H1 (cell line): ENCODE measurements at regions of chr2 and their contacts with region 1.

Region 1: GRCh38 chr2:185738679-185739472 is at the start of gene FSIP2:
- DNase-seq: peak; percentile 89 to 98
- H3K4me3 ChIP-seq: peak within 1 kb of the TSS; percentile 50 to 75 (median 61)
- H3K27ac ChIP-seq: no peak within 1 kb of the TSS; the same call in 1 of the 2 replicates
- H3K4me1 ChIP-seq: no peaks in the 10 kb centered on the region; a peak in 3 of 7 replicates
- H3K27me3 ChIP-seq: no peaks in the 10 kb centered on the region; a peak in 1 of 7 replicates
- CTCF ChIP-seq: peak; percentile 100
- EP300 ChIP-seq: 0 out of 3 replicates have a peak, but pooled peaks of 1 of the 2 experiments have one; percentile 50
- POLR2A ChIP-seq: peak in 1 of 2 experiments; percentile 29; a peak in 1 of 3 replicates
- RAD21 ChIP-seq: peak; percentile 98
- total RNA-seq, gene FSIP2: 1.4 and 1.7 TPM in 2 replicates

Region 2: GRCh38 chr2:185291035-185291647 is 447.7 kb before region 1 on chr2:
- CTCF ChIA-PET with region 1: interaction called, 89 read pairs
- POLR2A ChIA-PET with region 1: no interaction called
- DNase-seq: peak; percentile 54 to 74
- H3K4me3 ChIP-seq: no peak overlapping the region
- H3K27ac ChIP-seq: no peak overlapping the region
- H3K4me1 ChIP-seq: peaks cover 0 to 4% (median under 1%) of the 10 kb centered on the region in 4 experiments; a peak in 2 of 7 replicates
- H3K27me3 ChIP-seq: no peaks in the 10 kb centered on the region
- CTCF ChIP-seq: peak; percentile 82 to 89 (median 86)
- EP300 ChIP-seq: no peak
- POLR2A ChIP-seq: no peak
- RAD21 ChIP-seq: peak; percentile 94 to 96

Region 3: DNA sequence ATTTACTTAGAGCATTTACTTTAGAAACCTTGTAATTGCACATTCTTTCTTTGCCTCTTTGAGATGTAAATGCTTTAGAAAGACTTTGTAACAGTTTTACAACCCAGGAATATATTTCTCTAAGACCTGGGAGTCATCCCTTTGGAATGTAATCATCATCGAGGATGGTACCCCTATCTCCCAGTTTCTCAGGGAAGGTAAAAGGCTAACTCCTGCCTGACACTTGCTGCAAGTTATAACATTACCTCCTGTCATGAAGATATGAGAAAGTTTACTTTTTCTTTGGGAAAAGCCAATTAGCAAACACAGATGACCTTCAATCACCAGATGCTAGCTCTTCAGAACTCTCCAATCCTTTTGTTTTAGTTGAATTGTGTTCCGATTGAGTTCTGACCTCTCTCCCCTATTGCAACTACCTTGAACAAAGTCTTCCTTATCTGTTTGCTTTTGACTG is 420.6 kb before region 1 on chr2:
- CTCF ChIA-PET with region 1: interaction called, 17 read pairs
- POLR2A ChIA-PET with region 1: no interaction called
- DNase-seq: no peak
- H3K4me3 ChIP-seq: no peak overlapping the region
- H3K27ac ChIP-seq: no peak overlapping the region
- H3K4me1 ChIP-seq: no peaks in the 10 kb centered on the region
- H3K27me3 ChIP-seq: no peaks in the 10 kb centered on the region
- CTCF ChIP-seq: no peak
- EP300 ChIP-seq: no peak
- POLR2A ChIP-seq: no peak
- RAD21 ChIP-seq: no peak

Region 4: DNA sequence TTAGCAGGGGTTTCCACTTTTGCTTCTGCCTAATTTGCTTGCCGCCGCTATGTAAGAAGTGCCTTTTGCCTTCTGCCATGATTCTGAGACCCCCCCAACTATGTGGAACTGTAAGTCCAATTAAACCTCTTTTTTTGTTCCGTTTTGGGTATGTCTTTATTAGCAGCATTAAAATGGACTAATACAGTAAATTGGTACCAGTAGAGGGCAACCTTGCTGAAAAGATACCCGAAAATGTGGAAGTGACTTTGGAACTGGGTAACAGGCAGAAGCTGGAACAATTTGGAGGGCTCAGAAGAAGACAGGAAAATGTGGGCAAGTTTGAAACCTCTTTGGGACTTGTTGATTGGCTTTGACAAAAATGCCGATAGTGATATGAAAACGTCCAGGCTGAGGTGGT is 216.4 kb before region 1 on chr2:
- CTCF ChIA-PET with region 1: interaction called, 13 read pairs
- POLR2A ChIA-PET with region 1: no interaction called
- DNase-seq: no peak
- H3K4me3 ChIP-seq: no peak overlapping the region
- H3K27ac ChIP-seq: no peak overlapping the region
- H3K4me1 ChIP-seq: no peaks in the 10 kb centered on the region
- H3K27me3 ChIP-seq: no peaks in the 10 kb centered on the region
- CTCF ChIP-seq: peak in 2 of 3 experiments; percentile 10 to 32; a peak in 2 of 4 replicates
- EP300 ChIP-seq: no peak
- POLR2A ChIP-seq: no peak
- RAD21 ChIP-seq: peak; percentile 21 to 35; a peak in 2 of 4 replicates

Region 5: DNA sequence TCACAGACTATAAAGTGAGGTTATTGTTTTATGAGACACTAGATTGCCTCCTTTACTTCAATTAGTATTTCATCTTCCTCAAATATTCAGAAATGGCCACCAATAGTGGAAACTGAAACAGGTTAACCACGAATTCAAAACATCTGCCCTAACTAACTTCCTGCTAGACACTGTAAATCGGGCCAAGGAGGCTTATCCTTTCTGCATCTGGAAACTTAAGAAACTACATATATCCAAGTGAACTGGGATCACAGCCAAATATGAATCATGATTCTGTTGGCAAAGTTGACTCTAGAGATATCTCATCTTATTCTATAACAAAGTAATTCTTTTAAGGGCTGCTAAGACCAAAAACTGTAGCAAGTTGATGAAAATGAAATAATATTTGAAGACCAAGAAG is 610.6 kb after region 1 on chr2:
- CTCF ChIA-PET with region 1: no interaction called
- POLR2A ChIA-PET with region 1: no interaction called
- DNase-seq: no peak
- H3K4me3 ChIP-seq: no peak overlapping the region
- H3K27ac ChIP-seq: no peak overlapping the region
- H3K4me1 ChIP-seq: no peaks in the 10 kb centered on the region
- H3K27me3 ChIP-seq: no peaks in the 10 kb centered on the region
- CTCF ChIP-seq: no peak
- EP300 ChIP-seq: no peak
- POLR2A ChIP-seq: no peak
- RAD21 ChIP-seq: no peak